Activated B cell treated with CpG ODN at 0.5 μM for 24 hours (primary cell): ENCODE measurements at regions of chr14 and their contacts with region 1.

Region 1: GRCh38 chr14:39203659-39204606 is 28.9 kb downstream of the PNN start:
- DNase-seq: no peak
- ATAC-seq: no peak
- H3K4me3 Mint-ChIP-seq: no peak overlapping the region
- H3K27ac Mint-ChIP-seq: no peak overlapping the region
- H3K4me1 Mint-ChIP-seq: no peaks in the 10 kb centered on the region
- H3K27me3 Mint-ChIP-seq: no peaks in the 10 kb centered on the region
- CTCF ChIP-seq: no peak

Region 2: GRCh38 chr14:39243822-39244221 is 39.9 kb after region 1 on chr14:
- CTCF ChIA-PET with region 1: no interaction called
- POLR2A ChIA-PET with region 1: no interaction called
- intact Hi-C with region 1: loop called (anchors 5 kb)
- DNase-seq: no peak
- ATAC-seq: no peak
- H3K4me3 Mint-ChIP-seq: no peak overlapping the region
- H3K27ac Mint-ChIP-seq: no peak overlapping the region
- H3K4me1 Mint-ChIP-seq: no peaks in the 10 kb centered on the region
- H3K27me3 Mint-ChIP-seq: peaks cover 16% of the 10 kb centered on the region
- CTCF ChIP-seq: no peak

Region 3: GRCh38 chr14:39395555-39396254 is 191.8 kb after region 1 on chr14:
- CTCF ChIA-PET with region 1: no interaction called
- POLR2A ChIA-PET with region 1: no interaction called
- intact Hi-C with region 1: no loop called
- DNase-seq: no peak
- ATAC-seq: no peak
- H3K4me3 Mint-ChIP-seq: no peak overlapping the region
- H3K27ac Mint-ChIP-seq: no peak overlapping the region
- H3K4me1 Mint-ChIP-seq: no peaks in the 10 kb centered on the region
- H3K27me3 Mint-ChIP-seq: no peaks in the 10 kb centered on the region
- CTCF ChIP-seq: no peak